ENCODE measurements at regions of chr1 and their contacts with region 1.

Region 1: DNA sequence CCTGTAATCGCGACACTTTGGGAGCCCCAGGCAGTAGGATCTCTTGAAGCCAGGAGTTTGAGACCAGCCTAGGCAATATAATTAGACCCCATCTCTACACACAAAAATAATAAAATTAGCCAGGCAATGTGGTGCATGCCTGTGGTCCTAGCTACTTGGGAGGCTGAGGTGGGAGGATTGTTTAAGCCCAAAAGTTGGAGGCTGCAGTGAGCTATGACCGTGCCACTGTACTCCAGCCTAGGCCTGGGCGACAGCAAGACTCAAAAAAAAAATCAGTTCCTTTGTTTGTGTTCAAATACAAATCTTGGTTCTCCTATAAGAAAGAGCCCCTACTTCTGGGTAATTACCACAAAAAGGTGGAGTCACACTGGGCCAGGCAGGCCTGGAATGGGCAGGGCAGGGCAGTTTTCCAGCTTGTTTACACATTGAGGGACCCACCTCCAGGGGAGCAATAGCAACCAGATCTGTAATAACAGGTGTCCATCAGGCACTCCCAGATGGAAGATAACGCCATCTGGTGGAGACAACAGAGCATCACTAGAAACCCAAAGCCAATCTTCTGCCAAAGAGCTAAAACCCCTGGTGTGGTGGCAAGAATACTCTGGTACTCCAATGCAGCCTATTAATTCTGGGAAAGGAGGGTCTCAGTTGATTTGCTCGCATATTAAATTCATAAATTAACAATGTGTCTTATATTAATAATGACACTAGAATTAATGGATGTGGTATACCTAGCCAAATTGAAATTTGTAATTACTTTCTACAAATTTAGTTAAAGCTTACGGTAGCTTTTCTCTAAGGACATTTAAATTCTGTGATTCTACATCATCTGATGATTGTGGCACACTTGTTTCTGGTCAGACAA is 13.2 kb downstream of the PPP1R15B start:
- DNase-seq: peak; percentile 70
- ATAC-seq: peak; percentile 95
- H3K4me3 Mint-ChIP-seq: no peak overlapping the region
- H3K27ac Mint-ChIP-seq: peak overlapping the region; percentile 47
- H3K4me1 Mint-ChIP-seq: peaks cover 2% of the 10 kb centered on the region
- H3K27me3 Mint-ChIP-seq: no peaks in the 10 kb centered on the region

Region 2: DNA sequence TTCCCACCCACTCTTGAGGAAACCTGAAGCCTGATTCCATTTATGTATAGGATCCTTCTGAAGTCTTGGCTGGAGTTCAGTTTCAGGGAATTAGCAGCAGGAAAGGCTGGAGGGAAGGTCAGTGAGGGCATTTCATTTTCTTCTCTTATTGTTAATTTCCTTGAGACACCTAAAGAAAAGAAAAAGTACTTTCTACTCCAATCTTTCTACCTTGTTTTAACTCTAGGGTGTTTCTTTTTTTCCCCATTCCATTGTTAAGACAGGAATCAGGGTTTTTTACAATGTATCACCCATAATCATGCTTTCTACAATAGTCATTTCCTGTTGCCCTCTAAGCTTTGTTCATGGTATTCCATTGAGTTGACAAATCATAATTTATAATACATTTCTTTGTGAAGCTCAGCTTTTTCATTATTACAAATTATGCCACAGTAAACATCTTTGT is 509.6 kb before region 1 on chr1:
- CTCF ChIA-PET with region 1: no interaction called
- POLR2A ChIA-PET with region 1: no interaction called
- intact Hi-C with region 1: no loop called
- DNase-seq: no peak
- ATAC-seq: no peak
- H3K4me3 Mint-ChIP-seq: no peak overlapping the region
- H3K27ac Mint-ChIP-seq: no peak overlapping the region
- H3K4me1 Mint-ChIP-seq: no peaks in the 10 kb centered on the region
- H3K27me3 Mint-ChIP-seq: no peaks in the 10 kb centered on the region

Region 3: DNA sequence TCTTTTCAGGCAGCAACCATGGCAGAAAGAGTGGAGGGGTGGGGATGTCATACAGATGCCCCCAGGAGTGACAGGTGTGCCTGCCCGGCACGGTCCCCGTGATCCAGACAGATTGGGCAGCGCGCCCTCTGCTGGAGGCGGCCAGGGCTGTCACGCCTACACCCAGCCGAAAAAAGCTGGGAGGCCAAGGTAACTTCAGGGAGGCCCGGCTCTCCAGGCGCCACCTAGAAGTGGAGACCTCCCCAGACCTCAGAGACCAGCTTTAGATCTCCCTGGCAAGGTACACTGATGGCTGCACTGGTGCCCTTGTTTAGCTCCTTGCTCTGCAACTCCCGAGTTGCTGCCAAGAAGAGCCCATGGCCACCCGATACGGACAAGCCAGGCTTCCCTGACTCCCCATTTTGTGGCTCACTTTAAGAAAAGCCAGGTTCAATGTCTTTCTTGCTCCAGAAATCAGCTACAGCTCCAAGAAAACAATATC is 191.3 kb before region 1 on chr1:
- CTCF ChIA-PET with region 1: interaction called, 14 read pairs
- POLR2A ChIA-PET with region 1: no interaction called
- intact Hi-C with region 1: no loop called
- DNase-seq: peak; percentile 89
- ATAC-seq: peak; percentile 98
- H3K4me3 Mint-ChIP-seq: no peak overlapping the region
- H3K27ac Mint-ChIP-seq: no peak overlapping the region
- H3K4me1 Mint-ChIP-seq: peaks cover 12% of the 10 kb centered on the region
- H3K27me3 Mint-ChIP-seq: peaks cover 26% of the 10 kb centered on the region

Region 4: GRCh38 chr1:204368996-204369726 is 29.3 kb before region 1 on chr1:
- CTCF ChIA-PET with region 1: interaction called, 39 read pairs
- POLR2A ChIA-PET with region 1: no interaction called
- intact Hi-C with region 1: no loop called
- DNase-seq: no peak
- ATAC-seq: no peak
- H3K4me3 Mint-ChIP-seq: no peak overlapping the region
- H3K27ac Mint-ChIP-seq: no peak overlapping the region
- H3K4me1 Mint-ChIP-seq: peaks cover 17% of the 10 kb centered on the region
- H3K27me3 Mint-ChIP-seq: peaks cover 2% of the 10 kb centered on the region

Region 5: DNA sequence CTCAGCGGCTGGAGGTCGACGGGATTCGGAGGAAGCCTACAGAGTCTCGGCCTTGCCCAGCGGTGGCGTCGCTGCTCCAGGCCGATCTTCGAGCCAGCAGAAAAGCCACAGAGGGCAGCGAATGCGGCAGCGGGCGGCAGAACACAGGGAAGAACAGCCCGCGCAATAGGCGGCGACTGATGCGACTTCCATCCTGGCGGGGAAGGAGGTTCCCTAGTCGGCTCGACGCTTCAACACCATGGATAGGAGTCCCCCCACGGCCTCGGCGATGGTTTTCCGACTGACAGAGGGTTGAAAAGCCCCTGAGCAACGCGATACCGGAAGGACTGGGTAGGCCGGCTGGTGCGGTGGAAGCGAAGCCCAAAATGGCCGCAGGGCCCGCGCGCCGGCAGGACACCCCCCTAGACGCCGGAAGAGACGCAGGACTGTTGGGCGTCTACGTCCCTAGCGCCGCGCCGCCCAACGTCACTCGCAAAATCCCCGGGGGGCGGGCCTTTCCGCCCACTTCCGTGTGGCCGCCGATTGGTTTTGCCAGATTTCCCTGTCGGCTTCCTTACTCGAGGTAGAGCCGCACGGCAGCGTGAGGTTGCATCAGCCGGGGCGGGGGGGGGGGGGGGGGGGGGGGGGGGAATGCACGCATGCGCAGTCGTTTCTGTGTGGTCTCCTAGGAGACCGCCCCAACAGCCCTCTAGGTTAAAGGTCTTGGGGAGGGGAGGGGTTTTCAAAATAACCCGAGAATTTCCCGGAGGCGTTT is 13.2 kb after region 1 on chr1 and contains the start of gene PPP1R15B:
- CTCF ChIA-PET with region 1: interaction called, 75 read pairs
- POLR2A ChIA-PET with region 1: interaction called, 6 read pairs
- intact Hi-C with region 1: no loop called
- DNase-seq: peak; percentile 98
- ATAC-seq: peak; percentile 92
- H3K4me3 Mint-ChIP-seq: peak within 1 kb of the TSS; percentile 98
- H3K27ac Mint-ChIP-seq: peak within 1 kb of the TSS; percentile 100
- H3K4me1 Mint-ChIP-seq: peaks cover 10% of the 10 kb centered on the region
- H3K27me3 Mint-ChIP-seq: no peaks in the 10 kb centered on the region
- total RNA-seq, gene PPP1R15B: 55.9 to 57.6 TPM

Region 6: DNA sequence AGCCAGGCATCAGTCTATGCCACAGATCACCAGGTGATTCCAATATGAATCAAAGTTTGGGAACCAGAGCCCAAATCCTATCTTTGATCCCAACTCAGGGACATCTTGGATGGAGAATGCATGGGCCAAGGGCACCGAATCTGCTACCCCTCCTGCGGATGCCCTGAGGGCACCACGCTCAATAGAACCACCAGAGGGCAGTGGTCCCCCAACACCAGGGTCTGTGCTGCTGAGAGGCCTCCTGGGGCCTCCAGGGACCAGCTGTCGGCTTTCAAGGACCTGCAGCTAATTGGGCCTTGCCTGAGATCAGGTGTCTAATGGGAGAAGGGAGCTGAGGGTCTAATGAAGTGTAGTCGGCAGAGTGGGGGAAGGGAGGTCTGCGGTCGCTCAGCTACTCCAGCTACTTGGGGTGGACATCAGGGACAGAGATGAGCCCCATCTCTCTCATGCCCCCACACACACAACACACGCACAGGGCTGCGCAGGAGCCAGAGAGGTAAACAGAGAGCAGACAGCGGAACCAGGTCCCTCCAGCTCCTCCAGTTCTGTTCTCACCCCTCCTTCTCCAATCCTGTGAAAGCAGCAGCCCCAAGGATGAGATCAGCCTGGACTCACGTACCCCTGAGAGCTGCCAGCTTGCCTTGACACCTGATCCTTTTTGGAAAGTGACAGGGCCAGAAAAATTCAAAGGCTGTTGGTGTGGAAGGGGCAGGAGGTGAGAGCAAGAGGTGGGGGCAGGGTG is 48.1 kb after region 1 on chr1:
- CTCF ChIA-PET with region 1: interaction called, 10 read pairs
- POLR2A ChIA-PET with region 1: no interaction called
- intact Hi-C with region 1: no loop called
- DNase-seq: peak; percentile 86
- ATAC-seq: peak; percentile 82
- H3K4me3 Mint-ChIP-seq: no peak overlapping the region
- H3K27ac Mint-ChIP-seq: peak overlapping the region; percentile 86
- H3K4me1 Mint-ChIP-seq: peaks cover 49% of the 10 kb centered on the region
- H3K27me3 Mint-ChIP-seq: no peaks in the 10 kb centered on the region